K562 (cell line): ENCODE measurements at regions of chr11 and their contacts with region 1.

Region 1: GRCh38 chr11:72471005-72471898 is 36.9 kb upstream of the CLPB start:
- DNase-seq: peak; percentile 62 to 79 (median 68)
- ATAC-seq: peak; percentile 97
- H3K4me3 ChIP-seq: no peak overlapping the region
- H3K27ac ChIP-seq: no peak overlapping the region
- H3K4me1 ChIP-seq: no peaks in the 10 kb centered on the region
- H3K27me3 ChIP-seq: peaks cover 30 to 36% of the 10 kb centered on the region in 2 experiments
- CTCF ChIP-seq: peak; percentile 83 to 88 (median 87)
- EP300 ChIP-seq: no peak
- POLR2A ChIP-seq: no peak
- RAD21 ChIP-seq: peak; percentile 60 to 81

Region 2: GRCh38 chr11:72573072-72573854 is 102.0 kb after region 1 on chr11:
- CTCF ChIA-PET with region 1: interaction called, 6 read pairs
- POLR2A ChIA-PET with region 1: interaction called, 3 read pairs
- in situ Hi-C with region 1: loop called (anchors 5 kb)
- intact Hi-C with region 1: no loop called
- DNase-seq: peak; percentile 63 to 88 (median 84)
- ATAC-seq: peak; percentile 97
- H3K4me3 ChIP-seq: no peak overlapping the region
- H3K27ac ChIP-seq: no peak overlapping the region
- H3K4me1 ChIP-seq: no peaks in the 10 kb centered on the region
- H3K27me3 ChIP-seq: peaks cover 9 to 55% of the 10 kb centered on the region in 2 experiments; a peak in 4 of 5 replicates
- CTCF ChIP-seq: peak; percentile 71 to 85 (median 78)
- EP300 ChIP-seq: no peak
- POLR2A ChIP-seq: no peak
- RAD21 ChIP-seq: peak; percentile 18 to 65; a peak in 3 of 4 replicates

Region 3: DNA sequence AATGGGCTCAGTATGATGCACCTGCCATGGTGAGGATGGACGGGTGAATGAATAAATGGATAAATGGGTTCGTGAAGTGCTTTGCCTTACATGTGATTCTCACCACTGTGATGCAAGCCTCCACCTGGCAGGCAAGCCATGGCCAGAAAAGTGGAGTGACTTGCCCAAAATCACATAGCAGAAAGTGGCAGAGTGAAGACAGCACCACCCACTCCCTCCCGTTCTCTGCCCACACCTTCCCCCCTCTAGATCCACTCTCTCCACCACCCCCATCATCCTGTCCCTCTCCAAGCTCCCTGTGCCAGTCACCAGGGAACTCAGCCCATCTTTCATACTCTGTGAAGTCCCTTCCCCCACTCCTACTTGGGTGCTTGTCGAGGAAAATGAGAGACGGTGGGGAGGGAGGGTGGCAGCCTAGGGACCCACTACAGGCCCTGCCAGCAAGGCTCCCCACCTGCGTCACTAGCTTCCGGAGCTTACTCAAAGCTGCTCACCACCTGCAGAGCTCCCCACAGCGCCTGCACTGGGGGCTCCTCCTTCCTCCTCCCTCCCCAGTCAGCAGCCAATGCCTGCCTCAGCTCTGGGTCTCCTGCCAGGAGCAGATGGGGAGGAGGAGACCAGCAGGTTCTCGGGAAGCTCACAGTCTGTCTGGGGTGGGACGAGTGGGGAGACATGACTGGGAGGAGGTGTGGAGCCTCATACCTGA is 120.7 kb after region 1 on chr11:
- CTCF ChIA-PET with region 1: no interaction called
- POLR2A ChIA-PET with region 1: no interaction called
- in situ Hi-C with region 1: no loop called
- intact Hi-C with region 1: no loop called
- DNase-seq: no peak
- ATAC-seq: no peak
- H3K4me3 ChIP-seq: no peak overlapping the region
- H3K27ac ChIP-seq: no peak overlapping the region
- H3K4me1 ChIP-seq: peaks cover 0 to 12% of the 10 kb centered on the region in 2 experiments; a peak in 2 of 5 replicates
- H3K27me3 ChIP-seq: peaks cover 28 to 92% of the 10 kb centered on the region in 2 experiments; a peak in 4 of 5 replicates
- CTCF ChIP-seq: no peak
- EP300 ChIP-seq: no peak
- POLR2A ChIP-seq: no peak
- RAD21 ChIP-seq: no peak

Region 4: GRCh38 chr11:72676861-72677341 is 205.6 kb after region 1 on chr11:
- CTCF ChIA-PET with region 1: interaction called, 3 read pairs
- POLR2A ChIA-PET with region 1: no interaction called
- in situ Hi-C with region 1: loop called (anchors 10 kb)
- intact Hi-C with region 1: loop called (anchors 5 kb)
- DNase-seq: peak; percentile 73 to 96 (median 90)
- ATAC-seq: peak; percentile 95
- H3K4me3 ChIP-seq: no peak overlapping the region
- H3K27ac ChIP-seq: no peak overlapping the region
- H3K4me1 ChIP-seq: peaks cover 0 to 20% of the 10 kb centered on the region in 2 experiments; a peak in 2 of 5 replicates
- H3K27me3 ChIP-seq: peaks cover 7 to 67% of the 10 kb centered on the region in 2 experiments; a peak in 4 of 5 replicates
- CTCF ChIP-seq: no peak
- EP300 ChIP-seq: no peak
- POLR2A ChIP-seq: no peak
- RAD21 ChIP-seq: no peak

Region 5: GRCh38 chr11:72683782-72684200 is 212.5 kb after region 1 on chr11:
- CTCF ChIA-PET with region 1: no interaction called
- POLR2A ChIA-PET with region 1: no interaction called
- in situ Hi-C with region 1: loop called (anchors 10 kb)
- intact Hi-C with region 1: loop called (anchors 5 kb)
- DNase-seq: peak; percentile 74 to 80 (median 76)
- ATAC-seq: peak; percentile 88
- H3K4me3 ChIP-seq: no peak overlapping the region
- H3K27ac ChIP-seq: no peak overlapping the region
- H3K4me1 ChIP-seq: peaks cover 3 to 35% of the 10 kb centered on the region in 2 experiments; a peak in 4 of 5 replicates
- H3K27me3 ChIP-seq: peaks cover 0 to 10% of the 10 kb centered on the region in 2 experiments; a peak in 2 of 5 replicates
- CTCF ChIP-seq: peak; percentile 87 to 96 (median 93)
- EP300 ChIP-seq: no peak
- POLR2A ChIP-seq: no peak
- RAD21 ChIP-seq: peak; percentile 63 to 83; a peak in 3 of 4 replicates